ENCODE measurements at regions of chr6 and their contacts with region 1.

Region 1: GRCh38 chr6:168157272-168158007 is 78.4 kb upstream of the FRMD1 start:
- DNase-seq: no peak

Region 2: DNA sequence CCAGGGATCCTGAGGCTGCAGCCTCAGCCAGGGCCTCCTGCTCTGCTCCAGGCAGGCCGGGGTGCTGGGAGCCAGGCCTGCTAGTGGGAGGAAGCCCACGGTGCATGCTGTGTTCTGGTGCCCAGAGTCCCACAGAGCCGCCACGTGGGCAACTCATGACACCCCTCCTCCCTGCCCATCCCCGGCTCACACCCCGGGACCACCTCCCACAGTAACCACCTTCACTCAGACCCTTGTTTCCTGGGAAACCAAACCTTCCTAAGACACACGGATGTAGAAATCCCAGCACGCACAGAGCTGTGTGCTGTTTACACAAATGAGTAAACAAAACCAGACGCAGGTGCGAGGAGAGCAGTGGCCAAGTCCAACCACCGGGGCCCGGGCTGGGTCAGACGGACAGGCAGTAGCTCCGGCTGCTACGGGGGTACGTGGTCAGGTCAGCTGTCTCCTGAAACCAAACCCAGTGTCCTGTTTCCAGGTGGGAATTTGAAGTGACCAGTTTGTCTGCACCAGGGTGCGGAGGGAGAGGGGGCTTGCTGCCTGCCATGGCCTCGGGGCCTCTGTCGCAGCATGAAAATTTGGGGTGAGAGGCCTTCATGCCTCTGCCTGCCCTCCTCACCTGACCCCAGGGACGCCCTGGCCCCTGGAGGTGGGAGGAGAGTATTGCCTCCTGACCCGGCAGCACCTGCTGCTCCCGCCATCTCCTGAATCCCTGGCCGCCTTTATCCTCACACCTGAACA is 231.4 kb after region 1 on chr6:
- intact Hi-C with region 1: no loop called
- DNase-seq: no peak

Region 3: DNA sequence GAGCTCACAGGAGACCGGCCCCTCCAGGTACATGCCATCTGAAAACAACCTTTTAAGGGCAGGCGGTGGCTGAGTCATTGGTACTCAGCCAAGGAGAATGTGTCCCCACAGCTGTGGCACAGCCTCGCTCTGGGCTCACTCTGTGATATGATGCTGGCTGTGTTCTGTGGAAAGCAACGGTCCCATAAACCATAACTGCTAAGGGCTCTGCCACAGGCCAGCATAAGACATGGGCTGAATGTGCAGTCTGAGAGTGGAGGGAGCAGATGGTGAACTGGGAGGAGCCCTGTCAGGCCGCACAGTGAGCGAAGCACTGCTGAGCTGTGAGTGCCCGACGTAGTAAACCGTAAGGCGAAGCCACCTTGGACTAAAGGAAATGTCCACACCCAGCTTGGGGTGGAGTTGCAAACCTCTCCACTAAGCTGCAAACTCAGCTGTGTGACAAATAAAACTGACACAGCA is 720.4 kb after region 1 on chr6:
- intact Hi-C with region 1: loop called (anchors 10 kb)
- DNase-seq: no peak

Measured in cardiac septum (tissue), 1 donor.